ENCODE measurements at regions of chr6 and their contacts with region 1.

Region 1: GRCh38 chr6:156776840-156777576 is at the start of gene ARID1B:
- DNase-seq: peak; percentile 95
- total RNA-seq, gene ARID1B: 79.3 to 84.6 TPM

Region 2: DNA sequence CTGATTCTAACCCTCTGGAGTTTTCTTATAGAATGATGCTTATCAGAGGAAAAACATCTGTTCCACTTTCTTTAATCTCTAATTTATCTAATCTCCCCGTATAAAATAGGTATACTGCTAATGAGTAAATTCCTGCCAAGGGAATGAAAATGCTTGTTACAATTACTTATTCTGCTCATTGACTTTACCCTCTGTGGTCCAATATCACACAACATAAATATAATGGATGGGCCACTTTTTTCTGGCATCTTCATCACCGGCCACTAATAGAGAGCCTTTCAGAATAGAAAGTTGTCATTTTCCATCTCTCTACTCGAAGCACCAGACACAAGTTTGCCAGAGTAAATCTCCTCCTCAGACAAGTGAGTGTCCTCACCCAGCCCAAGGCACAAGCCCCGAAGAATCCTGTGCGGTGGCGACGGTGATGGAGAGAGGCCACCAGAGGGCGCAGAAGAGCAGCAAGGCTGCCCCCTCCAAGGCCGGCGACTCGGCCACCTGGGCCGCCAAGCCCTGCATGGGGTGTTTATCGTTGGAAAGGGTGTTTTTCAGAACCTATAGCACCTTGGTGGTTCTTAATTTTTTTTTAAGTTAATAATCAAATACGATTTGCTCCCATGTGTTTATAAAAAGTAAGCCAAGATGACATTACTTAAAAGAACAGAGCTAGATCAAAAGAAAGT is 212.7 kb before region 1 on chr6:
- intact Hi-C with region 1: loop called (anchors 10 kb)
- DNase-seq: peak; percentile 93

Region 3: DNA sequence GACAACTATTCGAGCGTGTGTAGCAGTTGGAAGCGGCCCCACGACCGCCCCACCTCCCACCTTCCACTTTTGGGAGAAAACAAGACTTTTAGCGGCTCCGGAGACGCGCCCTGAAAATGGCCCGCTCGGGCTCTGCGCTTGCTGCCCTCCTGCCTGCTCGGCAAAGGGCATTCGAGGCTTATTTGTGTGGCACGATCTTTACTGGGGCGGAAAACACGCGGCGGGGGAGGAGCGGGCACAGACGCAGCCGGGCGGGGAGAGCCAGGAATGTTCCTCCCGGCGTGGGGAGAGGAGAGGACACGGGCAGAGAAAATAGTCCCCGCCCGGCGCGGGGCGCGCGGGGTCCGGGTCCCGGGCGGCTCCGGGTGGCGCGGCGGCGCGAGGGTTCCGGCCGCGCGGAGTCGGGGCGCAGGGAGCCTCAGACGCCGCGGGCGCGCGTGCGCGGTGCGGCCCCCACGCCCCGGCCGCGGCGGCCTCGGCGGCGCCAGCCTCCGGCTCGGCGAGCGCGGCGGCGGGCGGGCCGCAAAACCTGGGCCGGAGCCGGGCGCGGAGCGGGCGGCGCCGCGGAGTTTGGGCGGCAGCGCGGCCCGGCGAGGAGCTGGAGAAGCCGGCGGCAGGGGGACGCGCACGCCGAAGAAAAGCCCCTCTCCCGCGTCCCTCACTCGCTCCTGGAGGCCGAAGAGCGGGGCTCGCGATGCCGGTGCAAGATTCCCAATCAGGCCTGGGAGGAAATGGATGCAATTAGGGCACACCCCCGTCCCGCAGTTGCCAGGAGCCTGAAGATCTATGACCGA is 89.8 kb before region 1 on chr6:
- intact Hi-C with region 1: loop called (anchors 2 to 10 kb)
- DNase-seq: peak; percentile 96

Region 4: GRCh38 chr6:156741287-156742073 is 35.5 kb before region 1 on chr6:
- intact Hi-C with region 1: no loop called
- DNase-seq: no peak

Region 5: DNA sequence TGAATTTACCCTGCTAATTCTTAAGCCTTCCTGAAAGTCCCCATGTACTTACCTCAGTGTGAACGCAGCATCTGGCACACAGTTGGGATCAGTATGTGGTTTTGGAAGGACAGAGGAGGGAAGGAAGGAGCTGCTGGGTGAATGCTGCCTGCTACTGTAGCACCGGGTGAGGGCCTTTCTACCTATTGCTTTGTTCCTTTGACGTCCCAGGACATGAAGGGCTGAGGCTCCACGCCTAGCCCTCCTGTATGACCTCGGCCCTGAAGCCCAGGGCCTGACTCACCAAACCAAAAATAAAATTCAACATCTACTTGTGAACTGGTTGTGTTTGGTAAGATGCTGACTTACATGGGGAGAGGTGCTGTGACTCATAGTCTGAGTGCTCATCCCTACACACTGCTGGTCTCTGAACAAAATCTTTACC is 51.3 kb after region 1 on chr6:
- intact Hi-C with region 1: loop called in 1 of 2 experiments (anchors 5 kb)
- DNase-seq: no peak

Region 6: DNA sequence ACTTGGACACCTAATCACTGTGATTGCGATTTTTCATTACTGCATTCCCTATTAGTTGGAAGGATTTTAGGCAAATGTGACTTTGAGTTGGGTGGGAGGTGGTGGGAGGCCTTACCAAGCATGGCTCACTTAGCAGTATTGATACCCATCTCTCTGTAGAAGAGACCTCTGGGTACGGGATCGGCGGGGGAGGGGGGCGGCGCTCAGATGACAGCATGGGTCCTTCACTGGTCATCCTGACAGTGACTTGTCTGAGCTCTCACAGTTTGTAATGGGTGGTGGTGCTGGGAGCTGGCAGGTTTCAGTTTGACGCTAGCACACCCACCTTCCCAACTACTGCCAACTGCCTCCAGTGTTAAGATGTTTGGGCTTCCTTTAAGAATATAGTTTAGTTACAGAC is 231.6 kb after region 1 on chr6:
- intact Hi-C with region 1: loop called in 1 of 2 experiments (anchors 10 kb)
- DNase-seq: no peak

Region 7: DNA sequence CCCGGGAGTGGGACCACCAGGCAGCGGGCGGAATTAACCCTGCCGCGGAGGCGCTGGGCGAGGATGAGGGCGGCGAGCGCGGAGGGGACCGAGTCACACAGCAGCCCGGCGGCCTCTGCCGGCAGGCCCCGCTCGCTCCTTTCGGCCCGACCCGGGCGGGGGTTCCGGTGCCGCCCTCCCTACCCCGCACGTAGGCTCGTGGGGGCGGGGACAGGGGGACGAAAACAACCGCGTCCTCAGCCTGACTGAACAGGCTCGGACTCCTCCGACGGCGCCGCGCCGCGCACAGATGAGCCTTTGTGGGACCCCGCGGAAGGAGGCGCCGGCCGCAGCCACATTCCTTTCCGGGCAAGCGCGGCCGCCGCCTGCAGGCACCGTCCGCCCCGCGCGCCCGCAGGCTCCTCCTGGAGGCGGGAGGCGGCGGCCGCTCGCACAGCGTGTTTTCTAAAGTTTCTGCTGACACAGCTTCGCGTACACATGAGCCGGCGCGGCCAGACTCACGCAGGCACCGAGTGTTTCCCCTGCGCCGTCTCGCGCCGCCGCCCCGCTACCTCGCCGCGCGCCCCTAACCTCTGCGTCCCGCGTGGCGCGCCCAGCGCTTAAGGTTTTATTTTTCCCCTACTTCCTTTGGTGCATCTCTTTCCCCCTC is 244.5 kb after region 1 on chr6:
- intact Hi-C with region 1: loop called in 1 of 2 experiments (anchors 5 kb)
- DNase-seq: peak; percentile 97